ENCODE measurements at regions of chr1 and their contacts with region 1.

Region 1: DNA sequence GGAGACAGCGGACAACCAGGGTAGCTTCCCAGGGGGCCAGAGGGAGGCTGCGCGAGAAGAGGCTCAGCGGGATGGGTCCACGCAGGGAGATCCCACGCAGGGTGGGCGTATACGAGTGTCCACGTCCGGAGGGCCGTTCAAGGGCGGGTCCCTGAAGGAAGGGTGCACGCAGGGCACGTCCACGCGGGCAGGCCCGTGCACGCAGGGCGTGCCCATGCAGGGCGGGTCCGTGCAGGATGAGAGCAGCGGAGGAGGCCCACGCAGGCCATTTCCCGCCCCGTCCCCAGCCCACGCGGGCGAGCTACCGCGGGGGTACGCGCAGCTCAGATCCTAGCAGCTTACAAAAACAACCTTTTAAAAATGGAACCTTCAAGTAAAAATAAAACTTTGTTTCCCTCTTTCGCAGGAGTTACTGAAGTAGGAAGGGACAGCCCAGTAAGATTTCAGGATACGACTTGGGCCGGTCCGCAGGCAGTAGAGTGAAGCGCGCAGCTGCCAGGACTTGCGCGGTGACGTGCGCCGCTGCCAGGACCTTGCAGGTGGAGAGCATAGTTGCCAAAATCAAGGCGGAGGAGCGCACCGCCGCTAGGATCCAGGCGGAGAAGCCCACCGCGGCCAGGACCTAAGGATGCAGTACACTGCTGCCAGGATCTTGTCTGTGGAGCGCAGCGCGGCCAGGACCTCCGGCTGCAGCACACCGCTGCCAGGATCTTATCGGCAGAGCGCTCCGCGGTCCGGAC is 416 bp upstream of the RNF187 start:
- DNase-seq: peak; percentile 72 to 88 (median 87)
- H3K4me3 ChIP-seq: peak overlapping the region; percentile 99
- H3K4me3 Mint-ChIP-seq: peak overlapping the region; percentile 95 to 99 (median 98)
- H3K27ac ChIP-seq: peak overlapping the region; percentile 100
- H3K27ac Mint-ChIP-seq: peak overlapping the region; percentile 100
- H3K4me1 ChIP-seq: peaks cover 24% of the 10 kb centered on the region
- H3K4me1 Mint-ChIP-seq: peaks cover 30 to 49% (median 31%) of the 10 kb centered on the region in 3 donors
- H3K27me3 ChIP-seq: no peaks in the 10 kb centered on the region
- H3K27me3 Mint-ChIP-seq: peaks cover 0 to 3% of the 10 kb centered on the region in 2 donors

Region 2: DNA sequence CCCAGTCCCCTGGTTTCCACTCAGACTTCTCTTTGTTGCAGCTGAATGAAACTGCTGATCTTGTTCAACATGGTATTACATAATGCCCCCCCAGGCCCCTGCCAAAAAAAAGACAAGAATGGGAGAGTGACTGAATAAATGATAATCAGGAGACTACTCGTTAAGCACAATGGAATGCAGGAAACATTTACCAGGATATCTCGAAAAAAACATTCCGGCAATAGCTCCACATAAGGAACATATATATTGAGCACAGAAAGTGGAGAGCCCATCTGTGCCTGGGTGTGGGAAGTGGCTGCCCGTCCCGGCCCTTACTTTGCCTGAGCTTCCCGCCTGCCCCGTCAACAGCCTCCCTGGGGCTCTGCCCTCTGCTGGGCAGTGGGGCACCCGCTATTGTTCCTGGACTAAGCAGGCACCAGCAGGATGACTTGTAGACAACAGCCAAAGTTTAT is 93.5 kb before region 1 on chr1:
- CTCF ChIA-PET with region 1: no interaction called
- POLR2A ChIA-PET with region 1: interaction called, 10 read pairs
- DNase-seq: no peak
- H3K4me3 ChIP-seq: no peak overlapping the region
- H3K4me3 Mint-ChIP-seq: no peak overlapping the region
- H3K27ac ChIP-seq: no peak overlapping the region
- H3K27ac Mint-ChIP-seq: peak overlapping the region in 3 of 8 donors; percentile 15 to 46 (median 27)
- H3K4me1 ChIP-seq: peaks cover 9% of the 10 kb centered on the region
- H3K4me1 Mint-ChIP-seq: peaks cover 8 to 10% (median 10%) of the 10 kb centered on the region in 3 donors
- H3K27me3 ChIP-seq: no peaks in the 10 kb centered on the region
- H3K27me3 Mint-ChIP-seq: no peaks in the 10 kb centered on the region

Region 3: GRCh38 chr1:228405987-228406265 is 80.8 kb before region 1 on chr1:
- CTCF ChIA-PET with region 1: interaction called, 3 read pairs
- POLR2A ChIA-PET with region 1: interaction called, 28 read pairs
- DNase-seq: no peak
- H3K4me3 ChIP-seq: peak overlapping the region; percentile 85
- H3K4me3 Mint-ChIP-seq: peak overlapping the region; percentile 80 to 95 (median 93)
- H3K27ac ChIP-seq: peak overlapping the region; percentile 84
- H3K27ac Mint-ChIP-seq: peak overlapping the region in 7 of 8 donors; percentile 81 to 93 (median 87)
- H3K4me1 ChIP-seq: peaks cover 55% of the 10 kb centered on the region
- H3K4me1 Mint-ChIP-seq: peaks cover 53 to 79% (median 67%) of the 10 kb centered on the region in 3 donors
- H3K27me3 ChIP-seq: no peaks in the 10 kb centered on the region
- H3K27me3 Mint-ChIP-seq: peaks cover 0 to 5% of the 10 kb centered on the region in 2 donors

Region 4: GRCh38 chr1:228457396-228458176 is 29.2 kb before region 1 on chr1:
- CTCF ChIA-PET with region 1: interaction called, 23 read pairs
- POLR2A ChIA-PET with region 1: interaction called, 54 read pairs
- DNase-seq: peak; percentile 70 to 93 (median 87)
- H3K4me3 ChIP-seq: peak overlapping the region; percentile 87
- H3K4me3 Mint-ChIP-seq: peak overlapping the region; percentile 91 to 99 (median 96)
- H3K27ac ChIP-seq: peak overlapping the region; percentile 95
- H3K27ac Mint-ChIP-seq: peak overlapping the region; percentile 98 to 100 (median 99)
- H3K4me1 ChIP-seq: peaks cover 34% of the 10 kb centered on the region
- H3K4me1 Mint-ChIP-seq: peaks cover 41 to 60% (median 53%) of the 10 kb centered on the region in 3 donors
- H3K27me3 ChIP-seq: no peaks in the 10 kb centered on the region
- H3K27me3 Mint-ChIP-seq: peaks cover 0 to 9% of the 10 kb centered on the region in 2 donors

Region 5: GRCh38 chr1:228464487-228464983 is 22.2 kb before region 1 on chr1:
- CTCF ChIA-PET with region 1: interaction called, 12 read pairs
- POLR2A ChIA-PET with region 1: interaction called, 54 read pairs
- DNase-seq: peak; percentile 82 to 92 (median 87)
- H3K4me3 ChIP-seq: peak overlapping the region; percentile 71
- H3K4me3 Mint-ChIP-seq: peak overlapping the region; percentile 79 to 94 (median 83)
- H3K27ac ChIP-seq: peak overlapping the region; percentile 57
- H3K27ac Mint-ChIP-seq: peak overlapping the region; percentile 43 to 96 (median 77)
- H3K4me1 ChIP-seq: peaks cover 30% of the 10 kb centered on the region
- H3K4me1 Mint-ChIP-seq: peaks cover 50 to 56% (median 51%) of the 10 kb centered on the region in 3 donors
- H3K27me3 ChIP-seq: no peaks in the 10 kb centered on the region
- H3K27me3 Mint-ChIP-seq: peaks cover 4 to 12% of the 10 kb centered on the region in 2 donors

Region 6: GRCh38 chr1:228471762-228472398 is 14.9 kb before region 1 on chr1:
- CTCF ChIA-PET with region 1: interaction called, 10 read pairs
- POLR2A ChIA-PET with region 1: interaction called, 5 read pairs
- DNase-seq: peak in 2 of 5 donors; percentile 17 to 24
- H3K4me3 ChIP-seq: no peak overlapping the region
- H3K4me3 Mint-ChIP-seq: no peak overlapping the region
- H3K27ac ChIP-seq: no peak overlapping the region
- H3K27ac Mint-ChIP-seq: peak overlapping the region in 2 of 8 donors; percentile 1
- H3K4me1 ChIP-seq: no peaks in the 10 kb centered on the region
- H3K4me1 Mint-ChIP-seq: peaks cover 6 to 10% (median 6%) of the 10 kb centered on the region in 3 donors
- H3K27me3 ChIP-seq: no peaks in the 10 kb centered on the region
- H3K27me3 Mint-ChIP-seq: peaks cover 13 to 15% of the 10 kb centered on the region in 2 donors